ENCODE measurements at regions of chr13 and their contacts with region 1.

Region 1: DNA sequence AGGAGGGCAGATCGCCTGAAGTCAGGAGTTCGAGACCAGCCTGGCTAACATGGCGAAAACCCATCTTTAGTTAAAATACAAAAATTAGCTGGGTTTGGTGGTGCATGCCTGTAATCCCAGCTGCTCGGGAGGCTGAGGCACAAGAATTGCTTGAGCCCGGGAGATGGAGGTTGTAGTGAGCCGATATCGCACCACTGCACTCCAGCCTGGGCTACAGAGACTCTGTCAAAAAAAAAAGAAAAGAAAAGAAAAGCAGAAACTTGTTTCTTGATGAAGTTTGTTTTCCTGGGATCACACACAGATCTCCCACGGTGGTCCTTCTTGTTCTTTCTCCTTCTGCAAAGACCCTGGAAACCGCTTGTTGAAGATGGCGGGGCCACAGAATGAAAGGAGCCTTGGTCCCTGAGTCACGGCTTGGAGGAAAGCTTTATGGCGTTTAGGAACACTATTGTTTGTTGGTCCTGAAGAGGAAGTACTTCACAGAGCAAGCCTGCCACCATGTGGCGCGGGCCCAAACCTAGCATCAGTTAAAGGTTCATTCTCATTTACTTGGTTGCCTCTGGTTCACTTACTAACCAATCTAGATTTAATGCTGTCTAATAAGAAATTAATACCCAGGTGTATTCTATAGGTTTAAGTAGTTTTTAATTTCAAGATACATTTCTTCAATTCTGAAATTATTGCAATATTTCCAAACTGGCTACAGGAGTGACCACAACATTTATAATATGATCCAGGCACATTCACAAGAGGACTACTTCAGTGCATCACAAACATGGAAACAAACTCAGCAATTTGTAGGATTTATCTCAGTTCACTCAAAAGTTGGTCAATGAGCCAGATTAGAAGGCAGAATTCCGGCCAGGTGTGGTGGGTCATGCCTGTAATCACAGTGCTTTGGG is 21.3 kb upstream of the ARL11 start:
- DNase-seq: peak; percentile 69 to 98 (median 90)

Region 2: DNA sequence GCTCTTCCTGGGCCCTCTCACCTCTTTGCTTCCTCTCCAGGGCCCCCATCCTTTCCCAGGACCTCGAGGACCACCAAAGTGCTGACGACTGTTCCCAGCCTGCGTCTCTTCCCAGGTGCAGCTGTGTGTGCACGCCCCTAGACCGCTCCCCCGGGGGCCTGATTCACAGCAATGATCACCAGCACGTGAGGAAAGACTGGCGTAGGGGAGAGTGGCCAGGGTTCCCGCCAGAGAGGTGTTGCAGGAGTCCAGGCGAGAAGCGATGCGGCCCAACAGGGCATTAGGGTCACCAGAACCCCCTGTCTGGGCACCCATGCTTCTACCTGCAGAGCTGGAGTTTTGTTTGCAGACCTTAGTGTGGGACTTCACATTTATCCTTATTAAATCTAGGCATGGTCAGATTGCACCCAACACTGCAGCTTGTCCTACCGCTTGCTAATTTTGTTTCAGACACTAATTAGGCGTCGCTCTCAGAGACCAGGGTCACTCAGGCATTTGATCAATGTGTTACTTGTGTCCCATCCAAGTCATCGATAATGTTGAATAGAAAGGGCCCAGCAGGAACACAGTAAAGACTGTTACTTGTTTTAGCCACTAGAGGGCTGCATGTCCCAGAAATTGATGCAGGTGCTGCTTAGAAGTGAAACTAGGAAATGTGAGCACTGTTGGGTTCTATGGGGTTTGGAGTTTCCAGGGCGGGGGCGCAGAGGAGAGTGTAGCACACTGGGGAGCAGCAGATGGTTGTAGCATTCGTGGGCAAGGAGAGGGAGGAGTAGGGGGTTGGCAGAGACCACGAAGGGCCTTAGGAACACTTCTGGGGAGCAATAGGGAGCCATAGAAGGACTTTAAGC is 306.0 kb before region 1 on chr13:
- intact Hi-C with region 1: loop called (anchors 1 kb)
- DNase-seq: peak in 7 of 10 donors; percentile 48 to 89 (median 57)

Region 3: DNA sequence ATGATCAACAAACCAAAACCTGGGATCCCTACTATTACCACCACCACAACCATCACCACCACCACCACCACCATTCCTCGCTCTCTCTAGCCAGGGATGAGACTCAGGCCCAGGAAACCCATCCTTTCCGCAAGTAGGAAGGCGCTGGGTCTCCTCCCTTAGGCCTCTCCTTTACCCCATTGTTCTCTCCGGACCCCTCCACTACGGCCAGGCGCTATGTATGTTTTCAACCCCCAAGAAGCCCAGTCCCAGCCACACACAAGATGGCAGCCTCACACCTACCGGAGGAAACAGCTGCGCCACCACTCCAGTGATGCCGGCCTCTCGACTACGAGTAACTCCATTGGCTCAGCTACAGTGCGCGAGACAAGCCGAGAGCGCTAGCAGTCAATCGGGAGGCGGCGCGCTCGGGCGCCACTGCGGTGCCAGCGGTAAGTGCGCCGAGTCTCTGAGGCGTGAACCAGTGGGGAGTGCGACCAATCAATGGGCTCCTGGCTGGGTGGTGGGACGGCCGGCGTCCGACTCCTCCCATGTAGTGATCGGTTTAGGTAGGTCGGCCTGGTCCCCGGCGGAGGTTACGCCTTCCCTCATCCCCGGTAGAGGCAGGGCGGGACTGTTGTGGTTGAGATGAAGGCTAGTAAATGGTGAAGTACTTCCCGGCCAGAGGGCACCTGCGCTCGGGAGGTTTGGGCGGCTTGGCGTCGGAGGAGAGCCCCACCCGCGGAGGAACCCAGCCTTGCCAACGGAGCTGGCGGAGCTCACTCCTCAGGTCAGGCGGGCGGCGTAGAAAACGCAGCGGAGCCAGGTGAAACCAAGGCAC is 163.1 kb before region 1 on chr13 and contains the starts of genes CAB39L and SETDB2:
- intact Hi-C with region 1: loop called (anchors 5 kb)
- DNase-seq: peak; percentile 96 to 100 (median 99)

Region 4: DNA sequence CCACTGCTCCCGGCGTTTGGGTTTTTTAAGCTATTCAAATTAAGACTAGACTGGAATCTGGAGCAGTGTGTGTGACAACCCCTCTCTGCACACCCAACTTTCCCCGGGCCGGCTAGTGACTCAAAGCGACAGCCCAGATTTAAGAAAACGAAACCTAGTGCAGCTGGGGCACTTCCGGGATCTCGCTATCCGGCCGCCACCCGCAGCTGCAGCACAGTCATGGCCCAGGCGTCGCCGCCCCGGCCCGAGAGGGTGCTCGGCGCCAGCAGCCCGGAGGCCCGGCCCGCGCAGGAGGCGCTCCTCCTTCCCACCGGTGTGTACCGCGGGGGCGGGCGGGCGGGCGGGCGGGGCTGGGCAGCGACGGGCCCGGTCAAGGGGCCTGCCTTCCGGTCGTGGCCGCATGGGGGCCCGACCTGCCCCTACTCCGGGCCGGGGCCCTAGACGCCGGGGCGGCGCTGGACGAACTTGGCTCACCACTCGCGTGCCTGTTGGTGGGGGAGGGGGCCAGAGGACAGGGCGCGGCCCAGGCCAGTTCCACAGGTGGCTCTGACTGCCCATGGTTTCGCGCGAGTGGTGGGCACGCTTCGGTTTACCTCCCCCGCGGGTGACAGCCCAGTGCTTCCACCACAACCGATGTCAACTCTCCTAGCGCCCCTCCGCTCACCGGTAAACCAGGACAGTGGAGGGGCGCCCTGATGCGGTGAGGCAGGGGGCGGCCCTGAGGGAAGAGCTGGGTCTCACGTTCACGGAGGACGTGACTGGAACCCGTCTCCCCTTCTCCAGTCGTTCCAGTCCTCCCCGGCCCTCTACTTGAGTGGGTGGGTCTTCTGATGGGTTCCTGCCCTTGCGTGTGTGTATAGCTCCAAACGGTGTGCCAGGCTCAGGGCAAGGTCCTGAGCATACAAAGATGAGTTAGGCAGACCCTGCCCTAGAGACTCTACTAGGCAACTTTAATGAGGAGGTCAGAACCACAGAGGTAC is 110.9 kb before region 1 on chr13 and contains the start of gene PHF11:
- intact Hi-C with region 1: loop called (anchors 5 kb)
- DNase-seq: peak; percentile 32 to 95 (median 61)

Region 5: GRCh38 chr13:49749848-49750247 is 142.8 kb after region 1 on chr13:
- intact Hi-C with region 1: no loop called
- DNase-seq: no peak

Measured in posterior cingulate gyrus (tissue), 11 donors.